ENCODE measurements at regions of chr11 and their contacts with region 1.

Region 1: DNA sequence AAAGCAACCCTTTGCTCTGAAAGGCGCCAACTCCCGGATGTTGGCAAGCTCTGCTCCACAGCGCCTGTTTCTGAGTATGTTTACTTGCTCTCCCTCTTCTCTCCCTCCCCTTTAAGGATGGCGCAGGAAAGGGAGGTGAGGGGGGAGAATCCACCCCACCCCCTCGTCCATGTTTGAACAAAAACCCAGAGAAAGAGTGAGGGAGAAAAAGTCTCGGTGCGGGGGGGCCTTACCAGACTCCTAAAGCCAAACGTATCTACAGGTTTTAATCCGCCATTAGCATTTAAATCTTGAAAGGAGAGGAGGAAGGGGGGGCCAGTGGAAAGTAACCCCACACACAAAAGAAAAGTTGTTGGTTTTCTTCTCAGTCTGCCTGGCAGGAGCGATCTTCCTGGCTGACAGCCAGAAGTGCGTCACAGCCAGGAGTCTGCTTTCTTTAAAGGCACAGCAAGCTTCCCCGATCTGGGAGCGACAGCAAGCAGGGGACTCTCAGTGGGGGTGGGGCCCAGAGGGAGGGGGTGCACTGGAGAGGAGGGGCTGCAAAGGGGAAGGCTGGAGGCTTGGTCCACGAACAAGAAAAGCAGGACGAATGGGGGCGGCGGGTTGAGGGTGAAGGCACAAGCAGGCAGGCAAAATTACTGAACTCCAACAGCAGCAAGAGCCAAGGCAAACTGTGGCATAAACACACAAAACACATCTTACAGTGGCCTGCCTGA is 39.5 kb downstream of the NUMA1 start:
- DNase-seq: peak; percentile 96 to 99
- H3K4me3 ChIP-seq: peak overlapping the region; percentile 53
- CTCF ChIP-seq: no peak
- POLR2A ChIP-seq: no peak

Region 2: GRCh38 chr11:72080256-72080974 is 39.5 kb after region 1 on chr11 and contains the starts of genes LRRC51 and NUMA1:
- intact Hi-C with region 1: loop called (anchors 5 kb)
- DNase-seq: peak; percentile 100
- H3K4me3 ChIP-seq: peak within 1 kb of the TSS; percentile 54
- CTCF ChIP-seq: no peak
- POLR2A ChIP-seq: peak in 1 of 2 donors; percentile 19
- total RNA-seq, gene LRRC51: 1.9 to 16.9 (median 4.9) TPM
- total RNA-seq, gene NUMA1: 356 to 592 (median 409) TPM

Measured in lower leg skin (tissue), 4 donors.